Right ventricle myocardium inferior (tissue), 1 donor: ENCODE measurements at regions of chrX and their contacts with region 1.

Region 1: GRCh38 chrX:44244008-44244407 is 99.5 kb downstream of the EFHC2 start:
- DNase-seq: no peak
- ATAC-seq: no peak

Region 2: DNA sequence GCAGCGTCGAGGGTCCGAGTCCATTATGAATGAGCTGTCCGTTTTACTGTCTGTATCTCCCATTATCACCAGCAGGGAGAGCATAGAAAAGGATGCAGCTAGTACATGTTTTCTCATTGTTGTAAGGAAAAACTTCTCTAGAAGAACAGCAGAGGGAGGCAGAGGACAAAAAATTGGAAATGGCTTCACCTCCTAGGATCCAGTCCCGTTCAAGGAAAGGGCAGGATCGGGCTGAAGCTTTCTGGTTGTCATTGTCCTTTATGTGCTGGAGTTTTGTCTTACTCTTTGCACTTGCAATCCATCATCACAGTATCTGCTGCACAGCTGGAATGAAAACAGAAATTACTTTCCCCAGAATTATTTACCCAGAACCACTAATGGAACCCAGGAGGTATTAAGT is 285.5 kb before region 1 on chrX:
- intact Hi-C with region 1: loop called (anchors 5 kb)
- DNase-seq: no peak
- ATAC-seq: peak; percentile 44